ENCODE measurements at regions of chr16 and their contacts with region 1.

Region 1: DNA sequence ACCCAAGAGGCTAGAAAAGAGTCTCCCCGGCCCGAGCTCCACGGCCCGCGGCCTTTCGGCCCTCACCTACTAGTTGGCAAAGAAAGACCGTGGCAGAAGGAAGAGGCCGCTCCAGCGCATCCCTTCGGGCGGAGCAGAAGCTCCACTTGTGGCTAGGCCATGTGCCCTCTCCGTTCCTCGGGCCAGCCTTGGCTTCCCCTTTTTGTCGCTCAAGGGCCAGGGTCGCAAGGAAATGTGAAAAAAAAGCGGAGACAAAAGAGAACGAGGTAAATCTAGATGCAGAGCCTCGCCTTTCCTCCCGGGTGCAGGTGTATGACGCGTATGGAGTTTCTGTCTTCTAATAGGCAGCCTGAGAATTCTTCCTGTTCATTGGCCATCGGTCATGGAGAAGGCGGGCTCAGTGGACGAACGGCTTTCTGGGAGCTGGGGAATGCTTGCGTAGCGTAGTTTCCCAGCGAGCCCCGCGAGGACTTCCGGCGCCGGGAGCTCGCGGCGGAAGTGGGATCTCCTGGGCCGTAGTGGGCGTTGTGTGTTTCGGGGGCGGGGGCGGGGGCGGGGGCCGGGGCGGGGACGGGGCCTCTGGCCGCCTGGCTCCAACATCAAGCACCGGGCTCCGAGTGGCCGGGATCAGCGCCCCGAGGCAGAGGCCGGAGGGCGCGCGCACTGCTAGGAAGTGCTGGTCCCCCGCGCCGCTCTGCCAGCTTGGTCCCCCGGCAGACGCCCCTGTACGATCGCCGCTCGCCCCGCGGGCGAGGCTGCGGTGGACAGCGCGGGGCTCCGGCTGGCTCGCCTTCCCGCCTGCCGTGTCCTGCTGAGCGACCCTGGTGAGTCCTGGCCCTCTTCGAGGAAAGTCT is at the start of gene ZNF213:
- H3K4me3 ChIP-seq: peak within 1 kb of the TSS; percentile 82
- H3K27ac ChIP-seq: peak within 1 kb of the TSS; percentile 90
- H3K4me1 ChIP-seq: peaks cover 3% of the 10 kb centered on the region; the same call in 1 of the 2 replicates
- CTCF ChIP-seq: 0 out of 2 replicates have a peak, but pooled peaks have one; percentile 1

Region 2: GRCh38 chr16:3123986-3124886 is 10.6 kb before region 1 on chr16:
- CTCF ChIA-PET with region 1: interaction called, 9 read pairs
- POLR2A ChIA-PET with region 1: interaction called, 17 read pairs
- H3K4me3 ChIP-seq: peak overlapping the region; percentile 73
- H3K27ac ChIP-seq: peak overlapping the region; percentile 58; the same call in 1 of the 2 replicates
- H3K4me1 ChIP-seq: no peaks in the 10 kb centered on the region; the same call in 1 of the 2 replicates
- CTCF ChIP-seq: peak; percentile 86

Region 3: DNA sequence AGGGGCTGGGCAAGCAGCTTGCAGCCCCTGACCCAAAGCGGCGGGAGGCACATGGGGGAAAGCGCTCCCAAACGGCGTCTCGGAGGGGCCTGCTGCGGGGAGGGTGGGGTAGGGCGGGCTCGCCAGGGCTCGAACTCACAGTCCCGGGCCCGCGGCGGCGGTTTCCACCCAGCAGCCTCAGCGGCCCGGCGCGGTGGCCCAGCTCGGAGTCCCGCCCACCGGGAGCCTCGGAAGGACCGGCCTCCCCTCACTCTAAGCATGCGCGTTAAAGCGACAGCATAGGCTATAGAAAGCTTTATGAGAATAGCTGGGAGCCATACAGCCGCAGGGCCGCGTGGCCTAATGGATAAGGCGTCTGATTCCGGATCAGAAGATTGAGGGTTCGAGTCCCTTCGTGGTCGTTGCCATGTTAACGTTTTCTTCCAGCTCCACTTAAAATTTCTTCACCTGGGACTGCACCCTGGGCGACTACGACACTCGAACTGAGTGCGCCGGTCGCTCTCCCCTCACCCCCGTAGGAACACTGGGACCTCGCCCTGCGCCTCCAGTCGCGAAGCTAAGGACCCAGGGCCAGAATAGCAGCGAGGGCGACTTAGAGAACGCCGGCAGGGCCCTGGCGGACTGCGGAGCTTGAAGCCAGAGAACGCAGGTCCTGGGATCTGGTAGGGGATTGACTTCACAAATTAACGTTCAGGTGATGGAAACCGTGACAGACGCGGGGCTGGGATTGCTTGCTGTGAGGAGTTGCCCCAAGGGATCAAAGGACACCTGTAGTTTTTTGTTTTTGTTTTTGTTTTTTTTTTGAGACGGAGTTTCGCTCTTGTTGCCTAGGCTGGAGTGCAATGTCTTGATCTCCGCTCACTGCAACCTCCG is 15.8 kb after region 1 on chr16:
- CTCF ChIA-PET with region 1: interaction called, 20 read pairs
- POLR2A ChIA-PET with region 1: interaction called, 38 read pairs
- H3K4me3 ChIP-seq: peak overlapping the region; percentile 59
- H3K27ac ChIP-seq: peak overlapping the region; percentile 88
- H3K4me1 ChIP-seq: no peaks in the 10 kb centered on the region
- CTCF ChIP-seq: 0 out of 2 replicates have a peak, but pooled peaks have one; percentile 16

Region 4: GRCh38 chr16:3158471-3159314 is 23.9 kb after region 1 on chr16:
- CTCF ChIA-PET with region 1: interaction called, 11 read pairs
- POLR2A ChIA-PET with region 1: interaction called, 19 read pairs
- H3K4me3 ChIP-seq: peak overlapping the region; percentile 60
- H3K27ac ChIP-seq: peak overlapping the region; percentile 91
- H3K4me1 ChIP-seq: no peaks in the 10 kb centered on the region
- CTCF ChIP-seq: 0 out of 2 replicates have a peak, but pooled peaks have one; percentile 32

Region 5: GRCh38 chr16:3173892-3174617 is 39.3 kb after region 1 on chr16:
- CTCF ChIA-PET with region 1: interaction called, 7 read pairs
- POLR2A ChIA-PET with region 1: interaction called, 20 read pairs
- H3K4me3 ChIP-seq: no peak overlapping the region
- H3K27ac ChIP-seq: no peak overlapping the region
- H3K4me1 ChIP-seq: no peaks in the 10 kb centered on the region
- CTCF ChIP-seq: peak; percentile 66